ENCODE measurements at regions of chr20 and their contacts with region 1.

Region 1: GRCh38 chr20:2865630-2866029 is 7.7 kb upstream of the PTPRA start:
- DNase-seq: peak; percentile 56
- ATAC-seq: peak; percentile 52
- H3K4me3 Mint-ChIP-seq: no peak overlapping the region
- H3K27ac Mint-ChIP-seq: peak overlapping the region; percentile 73
- H3K4me1 Mint-ChIP-seq: peaks cover 43% of the 10 kb centered on the region
- H3K27me3 Mint-ChIP-seq: no peaks in the 10 kb centered on the region

Region 2: GRCh38 chr20:2879146-2879545 is 13.5 kb after region 1 on chr20:
- CTCF ChIA-PET with region 1: interaction called, 12 read pairs
- POLR2A ChIA-PET with region 1: interaction called, 4 read pairs
- DNase-seq: no peak
- ATAC-seq: no peak
- H3K4me3 Mint-ChIP-seq: no peak overlapping the region
- H3K27ac Mint-ChIP-seq: no peak overlapping the region
- H3K4me1 Mint-ChIP-seq: peaks cover 35% of the 10 kb centered on the region
- H3K27me3 Mint-ChIP-seq: no peaks in the 10 kb centered on the region